ENCODE measurements at regions of chr3 and their contacts with region 1.

Region 1: DNA sequence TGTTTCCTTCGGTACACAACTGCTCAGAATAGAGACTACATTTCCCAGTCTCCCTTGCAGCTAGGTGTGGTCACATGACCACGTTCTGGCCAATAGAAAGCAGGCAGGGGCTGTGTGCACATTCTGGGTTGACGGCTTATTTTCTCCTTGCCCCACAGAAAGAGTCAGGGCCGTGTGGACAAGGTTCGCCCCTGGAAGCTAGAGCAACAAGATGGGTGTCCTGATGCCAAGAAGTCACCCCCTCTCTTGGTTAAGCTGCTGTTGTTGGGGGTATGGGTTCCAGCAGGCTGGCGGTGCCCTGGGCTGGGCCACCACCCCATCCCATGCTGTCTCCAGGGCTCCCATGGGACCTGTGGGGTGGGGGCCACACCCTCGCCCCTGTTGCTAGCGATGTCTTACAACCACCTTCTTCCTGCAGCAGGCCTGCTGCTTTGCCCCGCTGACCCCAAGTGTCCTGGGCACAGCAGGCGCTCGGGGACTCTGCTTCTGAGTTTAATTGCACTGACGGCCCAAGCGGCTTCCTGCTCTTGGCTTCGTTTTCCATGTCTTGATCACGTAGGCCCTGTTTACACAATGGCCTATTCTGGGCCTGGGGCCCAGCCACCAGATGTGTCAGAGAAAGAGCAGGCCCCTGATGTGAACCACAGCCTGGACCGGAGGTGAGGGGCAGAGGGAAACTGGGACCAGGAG is 24.9 kb downstream of the ABTB1 start:
- DNase-seq: peak; percentile 75 to 87 (median 79)
- ATAC-seq: peak; percentile 47 to 66 (median 61)
- H3K4me3 ChIP-seq: peak overlapping the region in 1 of 3 donors; percentile 18
- H3K27ac ChIP-seq: peak overlapping the region; percentile 36 to 84 (median 68)
- H3K4me1 ChIP-seq: peaks cover 0 to 61% (median 19%) of the 10 kb centered on the region in 4 donors
- H3K27me3 ChIP-seq: no peaks in the 10 kb centered on the region
- CTCF ChIP-seq: no peak
- POLR2A ChIP-seq: no peak

Region 2: GRCh38 chr3:127556565-127556964 is 141.1 kb before region 1 on chr3:
- intact Hi-C with region 1: no loop called
- DNase-seq: no peak
- ATAC-seq: no peak
- H3K4me3 ChIP-seq: no peak overlapping the region
- H3K27ac ChIP-seq: no peak overlapping the region
- H3K4me1 ChIP-seq: no peaks in the 10 kb centered on the region
- H3K27me3 ChIP-seq: no peaks in the 10 kb centered on the region
- CTCF ChIP-seq: peak in 1 of 4 donors; percentile 19
- POLR2A ChIP-seq: no peak

Region 3: DNA sequence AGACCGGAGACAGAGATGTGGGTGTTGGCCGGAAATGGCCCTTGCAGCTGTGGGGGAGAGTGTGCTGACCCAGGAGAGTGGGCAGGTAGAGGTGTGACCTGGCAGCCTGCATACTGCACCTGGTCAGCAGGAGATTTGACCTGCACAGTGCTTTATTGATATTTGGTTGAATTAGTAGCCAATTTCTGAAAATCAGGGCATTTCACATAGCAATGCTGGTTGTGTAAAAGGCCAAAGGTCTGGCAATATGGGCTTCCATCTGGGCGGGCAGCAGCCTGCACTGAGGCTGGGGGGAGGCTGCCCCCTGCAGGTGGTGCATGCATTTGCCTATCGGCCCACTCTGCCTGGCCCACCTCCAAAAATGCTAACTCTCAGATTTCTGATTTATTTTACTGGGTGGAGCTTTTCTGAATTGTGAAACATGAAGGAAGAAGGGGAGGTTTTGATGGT is 134.1 kb after region 1 on chr3:
- intact Hi-C with region 1: loop called in 1 of 2 experiments (anchors 10 kb)
- DNase-seq: peak; percentile 84 to 90 (median 87)
- ATAC-seq: peak; percentile 93 to 99 (median 96)
- H3K4me3 ChIP-seq: no peak overlapping the region
- H3K27ac ChIP-seq: peak overlapping the region in 1 of 3 donors; percentile 56
- H3K4me1 ChIP-seq: peaks cover 0 to 45% (median 2%) of the 10 kb centered on the region in 4 donors
- H3K27me3 ChIP-seq: no peaks in the 10 kb centered on the region
- CTCF ChIP-seq: peak; percentile 90 to 98 (median 97)
- POLR2A ChIP-seq: no peak

Measured in right lobe of liver (tissue), 6 donors.